Caco-2 (cell line): ENCODE measurements at regions of chr2 and their contacts with region 1.

Region 1: GRCh38 chr2:27191053-27191829 is 20.6 kb upstream of the ATRAID start:
- DNase-seq: peak; percentile 73 to 82
- H3K4me3 ChIP-seq: no peak overlapping the region
- H3K4me3 Mint-ChIP-seq: no peak overlapping the region
- H3K27ac Mint-ChIP-seq: no peak overlapping the region
- H3K4me1 ChIP-seq: no peaks in the 10 kb centered on the region
- H3K4me1 Mint-ChIP-seq: no peaks in the 10 kb centered on the region
- H3K27me3 ChIP-seq: no peaks in the 10 kb centered on the region
- H3K27me3 Mint-ChIP-seq: no peaks in the 10 kb centered on the region
- CTCF ChIP-seq: peak; percentile 73 to 88

Region 2: GRCh38 chr2:27133905-27134780 is 57.1 kb before region 1 on chr2 and contains the start of gene PREB:
- CTCF ChIA-PET with region 1: interaction called, 22 read pairs
- POLR2A ChIA-PET with region 1: interaction called, 7 read pairs
- intact Hi-C with region 1: no loop called
- DNase-seq: peak; percentile 97 to 99
- H3K4me3 ChIP-seq: peak within 1 kb of the TSS; percentile 64
- H3K4me3 Mint-ChIP-seq: peak within 1 kb of the TSS; percentile 86
- H3K27ac Mint-ChIP-seq: peak within 1 kb of the TSS; percentile 93
- H3K4me1 ChIP-seq: peaks cover 5% of the 10 kb centered on the region; the same call in 1 of the 2 replicates
- H3K4me1 Mint-ChIP-seq: peaks cover 6% of the 10 kb centered on the region
- H3K27me3 ChIP-seq: no peaks in the 10 kb centered on the region
- H3K27me3 Mint-ChIP-seq: no peaks in the 10 kb centered on the region
- CTCF ChIP-seq: peak in 1 of 2 experiments; percentile 47
- total RNA-seq, gene PREB: 62.5 and 65.3 TPM in 2 replicates

Region 3: GRCh38 chr2:27152786-27153510 is 38.3 kb before region 1 on chr2:
- CTCF ChIA-PET with region 1: interaction called, 67 read pairs
- POLR2A ChIA-PET with region 1: interaction called, 3 read pairs
- intact Hi-C with region 1: loop called (anchors 1 kb)
- DNase-seq: no peak
- H3K4me3 ChIP-seq: no peak overlapping the region
- H3K4me3 Mint-ChIP-seq: no peak overlapping the region
- H3K27ac Mint-ChIP-seq: no peak overlapping the region
- H3K4me1 ChIP-seq: 0 out of 2 replicates have a peak, but pooled peaks cover 4% of the 10 kb centered on the region
- H3K4me1 Mint-ChIP-seq: no peaks in the 10 kb centered on the region
- H3K27me3 ChIP-seq: no peaks in the 10 kb centered on the region
- H3K27me3 Mint-ChIP-seq: no peaks in the 10 kb centered on the region
- CTCF ChIP-seq: no peak

Region 4: DNA sequence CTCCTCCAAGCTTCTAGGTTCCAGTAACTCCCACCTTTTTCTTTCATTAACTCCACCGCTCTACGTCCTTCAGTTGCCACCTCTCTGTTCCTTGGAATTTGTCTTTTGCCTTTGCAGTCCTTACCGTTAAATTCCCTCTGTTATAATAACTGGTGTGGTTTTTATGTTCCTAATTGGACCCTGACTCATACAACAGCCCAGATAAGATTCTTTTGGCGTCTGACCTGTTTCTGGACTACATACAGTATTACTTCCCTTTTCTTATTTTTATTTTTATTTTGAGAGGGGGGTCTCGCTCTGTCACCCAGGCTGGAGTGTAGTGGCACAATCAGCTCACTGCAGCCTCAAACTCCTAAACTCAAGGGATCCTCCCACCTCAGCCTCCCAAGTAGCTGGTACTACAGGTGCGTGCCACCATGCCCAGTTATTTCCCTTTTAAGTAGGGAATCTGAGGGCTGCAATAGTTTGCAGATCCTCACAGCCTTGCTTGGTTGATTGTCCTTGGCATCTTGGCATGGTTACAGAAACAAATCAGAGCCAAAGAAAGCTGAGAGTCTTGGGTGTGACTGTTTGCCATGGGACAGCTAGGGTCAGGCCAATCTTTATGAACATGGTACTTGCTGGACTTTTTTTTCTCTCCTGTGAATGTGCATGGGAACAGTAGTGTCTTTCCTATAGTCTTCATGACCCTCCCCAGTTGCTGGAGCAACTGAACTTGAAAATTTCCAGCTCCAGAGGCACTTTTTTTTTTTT is 20.5 kb before region 1 on chr2:
- CTCF ChIA-PET with region 1: interaction called, 9 read pairs
- POLR2A ChIA-PET with region 1: no interaction called
- intact Hi-C with region 1: loop called (anchors 1 kb)
- DNase-seq: no peak
- H3K4me3 ChIP-seq: no peak overlapping the region
- H3K4me3 Mint-ChIP-seq: no peak overlapping the region
- H3K27ac Mint-ChIP-seq: no peak overlapping the region
- H3K4me1 ChIP-seq: no peaks in the 10 kb centered on the region
- H3K4me1 Mint-ChIP-seq: no peaks in the 10 kb centered on the region
- H3K27me3 ChIP-seq: no peaks in the 10 kb centered on the region
- H3K27me3 Mint-ChIP-seq: no peaks in the 10 kb centered on the region
- CTCF ChIP-seq: no peak